Psoas muscle (tissue), 8 donors: ENCODE measurements at regions of chr16 and their contacts with region 1.

Region 1: GRCh38 chr16:48623304-48624016 is 13.5 kb upstream of the N4BP1 start:
- DNase-seq: peak; percentile 82 to 89
- ATAC-seq: peak; percentile 96 to 99 (median 98)
- H3K4me3 ChIP-seq: peak overlapping the region; percentile 69
- H3K27ac ChIP-seq: peak overlapping the region; percentile 55
- H3K4me1 ChIP-seq: peaks cover 8% of the 10 kb centered on the region
- H3K27me3 ChIP-seq: peaks cover 0 to 1% (median 0%) of the 10 kb centered on the region in 3 donors
- CTCF ChIP-seq: peak; percentile 99

Region 2: DNA sequence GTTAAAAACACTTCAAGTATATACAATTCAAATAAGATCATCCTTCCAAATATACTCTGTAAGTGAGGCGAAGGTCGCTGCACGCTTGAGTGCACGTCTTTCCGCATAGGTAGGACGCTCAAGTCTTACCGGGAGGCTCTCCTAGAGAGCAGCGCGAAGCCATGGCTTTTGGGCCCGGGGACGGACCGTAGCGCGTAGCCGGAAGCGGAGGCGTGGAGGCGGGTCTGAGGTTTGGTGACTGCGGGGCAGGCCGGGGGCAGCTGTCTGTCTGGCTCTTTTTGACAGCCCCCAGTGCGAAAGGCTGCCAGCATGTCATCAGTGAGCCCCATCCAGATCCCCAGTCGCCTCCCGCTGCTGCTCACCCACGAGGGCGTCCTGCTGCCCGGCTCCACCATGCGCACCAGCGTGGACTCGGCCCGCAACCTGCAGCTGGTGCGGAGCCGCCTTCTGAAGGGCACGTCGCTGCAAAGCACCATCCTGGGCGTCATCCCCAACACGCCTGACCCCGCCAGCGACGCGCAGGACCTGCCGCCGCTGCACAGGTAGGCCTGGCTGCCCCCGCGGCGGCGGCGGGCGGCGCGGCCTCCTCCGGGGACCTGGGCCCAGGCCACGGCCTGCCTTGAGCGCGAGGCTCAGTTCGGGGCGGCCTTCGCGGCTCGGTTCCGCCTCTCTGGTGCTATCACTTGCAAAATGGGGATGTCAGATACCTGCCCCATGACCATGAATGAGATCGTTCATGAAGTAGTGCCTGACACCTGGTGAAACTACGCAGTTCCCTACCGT is 379.2 kb before region 1 on chr16 and contains the start of gene LONP2:
- intact Hi-C with region 1: loop called (anchors 10 kb)
- DNase-seq: peak; percentile 92 to 95
- ATAC-seq: peak; percentile 99 to 100 (median 100)
- H3K4me3 ChIP-seq: peak within 1 kb of the TSS; percentile 87
- H3K27ac ChIP-seq: peak within 1 kb of the TSS; percentile 88
- H3K4me1 ChIP-seq: peaks cover 23% of the 10 kb centered on the region
- H3K27me3 ChIP-seq: no peaks in the 10 kb centered on the region
- CTCF ChIP-seq: no peak
- total RNA-seq, gene LONP2: 46.5 to 68.0 (median 59.3) TPM

Region 3: GRCh38 chr16:48353565-48354163 is 269.8 kb before region 1 on chr16:
- intact Hi-C with region 1: loop called in 1 of 2 experiments (anchors 2 kb)
- DNase-seq: no peak
- ATAC-seq: peak; percentile 75 to 87 (median 76)
- H3K4me3 ChIP-seq: no peak overlapping the region
- H3K27ac ChIP-seq: peak overlapping the region; percentile 58
- H3K4me1 ChIP-seq: peaks cover 14% of the 10 kb centered on the region
- H3K27me3 ChIP-seq: no peaks in the 10 kb centered on the region
- CTCF ChIP-seq: peak; percentile 94

Region 4: GRCh38 chr16:48542020-48542473 is 81.4 kb before region 1 on chr16:
- intact Hi-C with region 1: loop called in 1 of 2 experiments (anchors 5 kb)
- DNase-seq: peak; percentile 46 to 79
- ATAC-seq: peak; percentile 71 to 88 (median 81)
- H3K4me3 ChIP-seq: no peak overlapping the region
- H3K27ac ChIP-seq: peak overlapping the region; percentile 41
- H3K4me1 ChIP-seq: peaks cover 41% of the 10 kb centered on the region
- H3K27me3 ChIP-seq: no peaks in the 10 kb centered on the region
- CTCF ChIP-seq: peak; percentile 69

Region 5: GRCh38 chr16:48576927-48577326 is 46.5 kb before region 1 on chr16:
- intact Hi-C with region 1: no loop called
- DNase-seq: no peak
- ATAC-seq: no peak
- H3K4me3 ChIP-seq: no peak overlapping the region
- H3K27ac ChIP-seq: no peak overlapping the region
- H3K4me1 ChIP-seq: peaks cover 31% of the 10 kb centered on the region
- H3K27me3 ChIP-seq: no peaks in the 10 kb centered on the region
- CTCF ChIP-seq: no peak